ENCODE measurements at regions of chr17 and their contacts with region 1.

Region 1: DNA sequence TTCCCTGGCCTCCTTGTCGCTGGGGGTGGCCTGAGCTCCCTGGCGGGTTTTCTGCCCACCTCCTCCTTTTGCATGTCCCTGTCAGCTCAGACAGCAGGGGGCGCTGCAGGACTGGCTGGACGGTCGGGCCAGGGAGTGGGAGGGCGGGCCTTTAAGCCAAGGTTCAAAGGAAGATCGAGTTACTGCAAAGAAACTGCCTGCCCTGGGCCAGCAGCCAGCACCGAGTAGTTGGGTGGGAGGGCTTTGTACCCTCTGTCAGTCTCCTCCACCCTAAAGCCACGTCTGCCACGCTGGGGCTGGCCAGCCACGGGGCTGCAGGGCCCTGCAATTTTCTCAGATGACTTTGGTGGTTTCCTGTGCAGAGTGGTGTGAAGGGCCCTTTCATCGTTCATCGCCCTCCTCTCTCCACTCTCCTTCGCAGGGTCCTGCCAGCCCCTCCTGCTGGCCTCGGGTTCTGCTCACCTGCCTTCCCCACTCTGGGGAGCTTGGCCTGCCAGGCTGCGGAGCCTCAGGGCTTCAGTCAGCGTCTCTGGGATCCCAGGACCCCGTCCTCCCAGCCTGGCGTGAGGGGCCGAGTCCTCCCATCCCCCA is 12.3 kb downstream of the GPR142 start:
- DNase-seq: peak; percentile 75 to 99
- H3K4me3 ChIP-seq: peak overlapping the region; percentile 1 to 54 (median 36); a peak in 6 of 8 replicates
- H3K27ac ChIP-seq: no peak overlapping the region
- H3K4me1 ChIP-seq: peaks cover 0 to 9% (median 6%) of the 10 kb centered on the region in 4 experiments; a peak in 6 of 7 replicates
- H3K27me3 ChIP-seq: 0 out of 7 replicates have a peak, but pooled peaks cover 0 to 1% (median 0%) of the 10 kb centered on the region in 4 experiments
- CTCF ChIP-seq: peak; percentile 86 to 96 (median 93)
- EP300 ChIP-seq: no peak
- POLR2A ChIP-seq: no peak
- RAD21 ChIP-seq: peak; percentile 98 to 99

Region 2: GRCh38 chr17:74296548-74296936 is 83.0 kb before region 1 on chr17:
- CTCF ChIA-PET with region 1: interaction called, 20 read pairs
- POLR2A ChIA-PET with region 1: no interaction called
- DNase-seq: peak; percentile 23 to 58
- H3K4me3 ChIP-seq: no peak overlapping the region
- H3K27ac ChIP-seq: no peak overlapping the region
- H3K4me1 ChIP-seq: no peaks in the 10 kb centered on the region
- H3K27me3 ChIP-seq: no peaks in the 10 kb centered on the region; a peak in 1 of 7 replicates
- CTCF ChIP-seq: peak; percentile 60 to 80 (median 76)
- EP300 ChIP-seq: no peak
- POLR2A ChIP-seq: no peak
- RAD21 ChIP-seq: peak; percentile 43 to 70; a peak in 3 of 4 replicates

Region 3: GRCh38 chr17:74340470-74341023 is 39.0 kb before region 1 on chr17:
- CTCF ChIA-PET with region 1: no interaction called
- POLR2A ChIA-PET with region 1: no interaction called
- DNase-seq: no peak
- H3K4me3 ChIP-seq: no peak overlapping the region
- H3K27ac ChIP-seq: no peak overlapping the region
- H3K4me1 ChIP-seq: peaks cover 0 to 16% (median 9%) of the 10 kb centered on the region in 4 experiments; a peak in 5 of 7 replicates
- H3K27me3 ChIP-seq: no peaks in the 10 kb centered on the region; a peak in 1 of 7 replicates
- CTCF ChIP-seq: no peak
- EP300 ChIP-seq: no peak
- POLR2A ChIP-seq: no peak
- RAD21 ChIP-seq: no peak

Region 4: DNA sequence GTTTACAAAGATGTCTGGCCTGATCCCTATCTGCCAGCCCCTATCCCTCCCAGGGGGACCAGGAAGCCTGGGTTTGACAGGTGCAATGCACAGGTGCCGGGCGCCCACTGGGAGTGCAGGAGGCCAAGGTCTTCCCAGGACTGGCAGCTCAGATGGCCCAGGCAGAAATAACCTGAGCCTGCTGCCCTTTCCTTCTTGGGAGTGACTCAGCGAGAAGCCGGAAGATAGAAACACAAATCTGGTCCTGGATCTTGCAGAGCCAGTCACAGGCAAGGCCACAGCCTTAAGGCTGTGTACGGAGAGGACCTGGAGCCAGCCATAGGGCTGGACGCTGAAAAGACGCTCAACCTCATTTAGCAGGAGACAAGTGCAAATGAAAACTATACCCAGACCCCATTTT is 15.4 kb after region 1 on chr17:
- CTCF ChIA-PET with region 1: interaction called, 57 read pairs
- POLR2A ChIA-PET with region 1: no interaction called
- DNase-seq: no peak
- H3K4me3 ChIP-seq: no peak overlapping the region
- H3K27ac ChIP-seq: no peak overlapping the region
- H3K4me1 ChIP-seq: no peaks in the 10 kb centered on the region; a peak in 1 of 7 replicates
- H3K27me3 ChIP-seq: no peaks in the 10 kb centered on the region
- CTCF ChIP-seq: no peak
- EP300 ChIP-seq: no peak
- POLR2A ChIP-seq: no peak
- RAD21 ChIP-seq: no peak

Region 5: GRCh38 chr17:74417178-74418045 is 37.8 kb after region 1 on chr17:
- CTCF ChIA-PET with region 1: interaction called, 22 read pairs
- POLR2A ChIA-PET with region 1: no interaction called
- DNase-seq: no peak
- H3K4me3 ChIP-seq: no peak overlapping the region
- H3K27ac ChIP-seq: no peak overlapping the region
- H3K4me1 ChIP-seq: peaks cover 0 to 4% (median 0%) of the 10 kb centered on the region in 4 experiments; a peak in 2 of 7 replicates
- H3K27me3 ChIP-seq: no peaks in the 10 kb centered on the region
- CTCF ChIP-seq: no peak
- EP300 ChIP-seq: no peak
- POLR2A ChIP-seq: no peak
- RAD21 ChIP-seq: no peak

Region 6: DNA sequence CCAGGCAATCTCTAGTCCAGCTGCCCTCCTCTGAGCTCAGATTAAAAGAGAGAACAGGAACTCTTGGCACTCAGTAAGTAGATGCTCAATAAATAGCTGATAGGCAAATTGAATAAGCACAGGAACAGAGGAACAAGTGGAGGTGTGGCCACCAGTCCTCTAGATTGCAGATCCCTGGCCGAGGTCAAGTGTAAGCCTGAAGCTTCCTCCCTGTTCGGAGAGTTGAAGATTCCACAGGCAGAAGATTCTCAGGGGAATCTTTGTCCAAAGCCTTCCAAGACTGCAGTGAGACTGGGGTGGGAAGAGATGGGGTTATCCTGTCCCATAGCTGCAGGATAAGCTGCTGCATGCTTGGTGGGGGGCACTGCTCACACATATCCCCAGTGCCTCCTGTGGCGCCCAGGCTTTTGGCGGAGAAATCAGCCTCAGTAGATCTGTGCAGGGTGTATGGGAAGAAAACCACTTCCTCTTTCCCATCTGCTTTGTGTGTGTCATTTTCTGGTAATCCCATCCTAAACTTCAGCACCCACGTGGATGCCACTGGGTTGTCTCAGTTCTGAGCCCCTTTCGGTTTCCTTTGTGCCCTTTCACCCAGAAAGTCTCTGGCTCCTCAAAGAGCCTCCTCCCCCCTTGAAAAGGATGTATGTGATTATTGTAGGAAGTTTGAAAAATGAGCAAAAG is 99.0 kb after region 1 on chr17:
- CTCF ChIA-PET with region 1: interaction called, 25 read pairs
- POLR2A ChIA-PET with region 1: no interaction called
- DNase-seq: no peak
- H3K4me3 ChIP-seq: no peak overlapping the region
- H3K27ac ChIP-seq: no peak overlapping the region
- H3K4me1 ChIP-seq: no peaks in the 10 kb centered on the region
- H3K27me3 ChIP-seq: no peaks in the 10 kb centered on the region; a peak in 1 of 7 replicates
- CTCF ChIP-seq: no peak
- EP300 ChIP-seq: no peak
- POLR2A ChIP-seq: no peak
- RAD21 ChIP-seq: no peak

Region 7: GRCh38 chr17:74528491-74529199 is 149.1 kb after region 1 on chr17:
- CTCF ChIA-PET with region 1: interaction called, 21 read pairs
- POLR2A ChIA-PET with region 1: no interaction called
- DNase-seq: no peak
- H3K4me3 ChIP-seq: no peak overlapping the region
- H3K27ac ChIP-seq: no peak overlapping the region
- H3K4me1 ChIP-seq: peaks cover 0 to 4% (median under 1%) of the 10 kb centered on the region in 4 experiments; a peak in 2 of 7 replicates
- H3K27me3 ChIP-seq: peaks cover 0 to 2% (median 0%) of the 10 kb centered on the region in 4 experiments; a peak in 2 of 7 replicates
- CTCF ChIP-seq: no peak
- EP300 ChIP-seq: no peak
- POLR2A ChIP-seq: no peak
- RAD21 ChIP-seq: no peak

Measured in H1 (cell line).